Calu3 (cell line): ENCODE measurements at regions of chr18 and their contacts with region 1.

Region 1: GRCh38 chr18:47930931-47931717 is 665 bp upstream of the SMAD2 start:
- DNase-seq: peak; percentile 97
- H3K4me3 Mint-ChIP-seq: peak overlapping the region; percentile 74
- H3K27ac Mint-ChIP-seq: peak overlapping the region; percentile 84
- H3K4me1 Mint-ChIP-seq: peaks cover 45% of the 10 kb centered on the region
- H3K27me3 Mint-ChIP-seq: no peaks in the 10 kb centered on the region
- CTCF ChIP-seq: no peak

Region 2: DNA sequence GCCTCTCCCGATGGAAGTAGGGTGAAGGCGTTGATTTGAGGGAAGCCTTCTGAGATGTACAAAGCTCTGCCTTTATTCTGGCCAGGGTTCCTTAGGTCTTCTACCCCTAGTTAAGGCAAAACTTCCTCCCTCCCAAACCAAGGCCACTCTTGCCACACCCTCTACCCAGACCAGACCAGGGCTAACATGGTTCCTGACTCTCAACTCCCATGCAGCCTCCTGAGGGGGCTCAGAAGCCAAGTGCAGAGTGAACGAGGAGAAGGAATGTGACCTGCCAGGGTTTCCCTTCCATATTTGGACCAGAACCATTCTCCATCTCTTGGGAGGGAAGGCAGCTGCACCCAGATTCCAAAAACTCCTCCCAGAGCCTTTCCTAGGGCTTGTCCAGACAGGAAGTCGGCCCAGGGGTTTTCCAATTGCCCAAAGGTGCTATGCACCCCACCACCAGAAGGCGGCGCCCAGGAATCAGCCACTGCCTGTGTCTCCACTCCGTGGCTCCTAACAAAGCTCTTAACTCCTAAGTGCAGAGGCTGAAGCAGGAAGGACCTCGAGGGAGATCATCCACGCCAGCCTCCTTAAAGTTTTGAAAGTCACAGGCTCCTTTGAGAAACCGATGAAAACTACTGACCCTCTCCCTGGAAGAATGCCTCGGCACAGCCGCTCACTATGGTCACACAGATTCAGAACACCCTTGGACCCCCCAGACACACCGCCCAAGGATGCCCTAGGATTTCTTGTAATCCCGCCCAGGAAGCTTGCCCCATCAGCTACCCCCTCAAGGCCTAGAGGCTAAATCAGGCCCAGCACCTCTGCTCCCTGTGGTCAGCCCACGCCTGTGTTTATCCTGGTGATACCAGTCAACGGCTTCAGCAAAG is 158.5 kb before region 1 on chr18:
- CTCF ChIA-PET with region 1: interaction called, 3 read pairs
- intact Hi-C with region 1: loop called (anchors 5 kb)
- DNase-seq: peak; percentile 92
- H3K4me3 Mint-ChIP-seq: no peak overlapping the region
- H3K27ac Mint-ChIP-seq: no peak overlapping the region
- H3K4me1 Mint-ChIP-seq: peaks cover 6% of the 10 kb centered on the region
- H3K27me3 Mint-ChIP-seq: peaks cover 67% of the 10 kb centered on the region
- CTCF ChIP-seq: peak; percentile 88

Region 3: DNA sequence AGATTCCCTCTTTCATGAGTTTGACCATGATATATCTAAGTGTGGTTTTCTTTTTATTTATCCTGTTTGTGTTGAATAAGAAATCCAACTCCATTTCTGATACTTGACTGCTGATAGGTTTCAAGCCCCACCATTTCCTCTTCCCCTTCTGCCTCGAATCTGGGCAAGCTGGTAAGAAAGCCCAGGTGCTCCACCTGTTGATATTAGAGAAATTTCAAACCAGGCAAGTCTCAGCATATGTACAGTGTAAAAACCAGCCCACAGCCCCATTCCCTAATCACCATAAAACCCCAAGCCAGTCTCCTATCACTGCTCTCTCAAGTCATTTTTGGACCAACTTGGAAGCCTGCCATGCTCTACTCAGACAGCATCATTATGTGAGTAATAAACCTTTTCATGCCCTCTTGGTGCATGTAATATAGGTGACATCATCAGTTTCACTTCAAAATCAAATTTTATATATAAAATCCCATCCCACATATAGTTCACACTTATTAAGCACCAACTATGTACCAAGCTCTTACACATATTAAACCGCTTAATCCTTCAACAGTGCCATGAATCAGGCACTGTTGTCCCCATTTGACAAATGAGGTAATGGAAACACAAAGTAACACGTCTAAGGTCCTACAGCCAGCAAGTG is 47.2 kb before region 1 on chr18:
- CTCF ChIA-PET with region 1: no interaction called
- intact Hi-C with region 1: loop called (anchors 2 kb)
- DNase-seq: peak; percentile 40
- H3K4me3 Mint-ChIP-seq: peak overlapping the region; percentile 2
- H3K27ac Mint-ChIP-seq: peak overlapping the region; percentile 88
- H3K4me1 Mint-ChIP-seq: peaks cover 52% of the 10 kb centered on the region
- H3K27me3 Mint-ChIP-seq: no peaks in the 10 kb centered on the region
- CTCF ChIP-seq: no peak

Region 4: GRCh38 chr18:47986620-47987387 is 55.7 kb after region 1 on chr18:
- CTCF ChIA-PET with region 1: no interaction called
- intact Hi-C with region 1: no loop called
- DNase-seq: no peak
- H3K4me3 Mint-ChIP-seq: no peak overlapping the region
- H3K27ac Mint-ChIP-seq: no peak overlapping the region
- H3K4me1 Mint-ChIP-seq: no peaks in the 10 kb centered on the region
- H3K27me3 Mint-ChIP-seq: peaks cover 31% of the 10 kb centered on the region
- CTCF ChIP-seq: no peak

Region 5: GRCh38 chr18:48002933-48003365 is 71.8 kb after region 1 on chr18:
- CTCF ChIA-PET with region 1: no interaction called
- intact Hi-C with region 1: loop called (anchors 5 kb)
- DNase-seq: peak; percentile 80
- H3K4me3 Mint-ChIP-seq: peak overlapping the region; percentile 32
- H3K27ac Mint-ChIP-seq: peak overlapping the region; percentile 82
- H3K4me1 Mint-ChIP-seq: peaks cover 23% of the 10 kb centered on the region
- H3K27me3 Mint-ChIP-seq: no peaks in the 10 kb centered on the region
- CTCF ChIP-seq: no peak

Region 6: DNA sequence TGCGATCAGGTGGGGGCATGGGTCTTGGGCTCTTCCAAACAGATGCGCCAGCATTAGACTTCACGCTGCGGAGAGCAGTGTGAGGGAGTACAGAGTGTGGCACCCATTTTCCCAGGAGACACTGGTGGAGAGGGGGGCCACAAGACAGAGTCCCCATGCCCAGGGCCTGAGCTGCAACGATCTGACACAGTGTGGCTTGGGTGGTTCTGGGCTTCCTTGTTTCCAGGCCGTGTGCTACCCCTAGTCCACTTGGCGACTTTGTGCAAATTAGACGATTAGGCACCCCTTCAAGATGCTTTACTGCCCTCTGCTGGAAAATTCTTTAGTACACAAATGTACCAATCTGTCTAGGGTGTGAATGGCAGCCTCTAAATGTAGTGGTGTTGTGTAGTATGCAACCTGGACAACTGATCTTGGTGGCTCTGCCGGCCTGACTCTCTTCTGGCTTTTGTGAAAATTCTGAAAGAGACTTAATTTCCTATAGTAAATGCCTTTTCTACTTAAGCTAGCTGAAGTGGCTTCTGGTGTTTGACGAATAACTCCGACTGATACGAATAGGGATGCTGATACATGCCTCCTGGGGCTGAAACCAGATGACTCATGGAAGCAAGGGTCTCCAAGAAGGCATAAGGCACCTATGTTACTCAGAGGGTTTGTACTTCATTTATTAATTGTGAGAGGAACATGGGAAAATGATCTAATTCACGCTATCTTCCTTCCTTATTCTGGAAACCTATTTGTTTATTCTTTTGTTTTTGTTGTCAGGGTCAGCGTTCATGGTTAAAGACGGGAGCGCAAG is 91.6 kb after region 1 on chr18:
- CTCF ChIA-PET with region 1: no interaction called
- intact Hi-C with region 1: loop called (anchors 1 kb)
- DNase-seq: peak; percentile 55
- H3K4me3 Mint-ChIP-seq: no peak overlapping the region
- H3K27ac Mint-ChIP-seq: no peak overlapping the region
- H3K4me1 Mint-ChIP-seq: peaks cover 14% of the 10 kb centered on the region
- H3K27me3 Mint-ChIP-seq: peaks cover 58% of the 10 kb centered on the region
- CTCF ChIP-seq: peak; percentile 66

Region 7: GRCh38 chr18:48460929-48461583 is 529.9 kb after region 1 on chr18:
- CTCF ChIA-PET with region 1: interaction called, 3 read pairs
- intact Hi-C with region 1: loop called (anchors 10 kb)
- DNase-seq: no peak
- H3K4me3 Mint-ChIP-seq: no peak overlapping the region
- H3K27ac Mint-ChIP-seq: no peak overlapping the region
- H3K4me1 Mint-ChIP-seq: peaks cover 42% of the 10 kb centered on the region
- H3K27me3 Mint-ChIP-seq: peaks cover 13% of the 10 kb centered on the region
- CTCF ChIP-seq: no peak